Body of pancreas (tissue), 4 donors: ENCODE measurements at regions of chr9 and their contacts with region 1.

Region 1: DNA sequence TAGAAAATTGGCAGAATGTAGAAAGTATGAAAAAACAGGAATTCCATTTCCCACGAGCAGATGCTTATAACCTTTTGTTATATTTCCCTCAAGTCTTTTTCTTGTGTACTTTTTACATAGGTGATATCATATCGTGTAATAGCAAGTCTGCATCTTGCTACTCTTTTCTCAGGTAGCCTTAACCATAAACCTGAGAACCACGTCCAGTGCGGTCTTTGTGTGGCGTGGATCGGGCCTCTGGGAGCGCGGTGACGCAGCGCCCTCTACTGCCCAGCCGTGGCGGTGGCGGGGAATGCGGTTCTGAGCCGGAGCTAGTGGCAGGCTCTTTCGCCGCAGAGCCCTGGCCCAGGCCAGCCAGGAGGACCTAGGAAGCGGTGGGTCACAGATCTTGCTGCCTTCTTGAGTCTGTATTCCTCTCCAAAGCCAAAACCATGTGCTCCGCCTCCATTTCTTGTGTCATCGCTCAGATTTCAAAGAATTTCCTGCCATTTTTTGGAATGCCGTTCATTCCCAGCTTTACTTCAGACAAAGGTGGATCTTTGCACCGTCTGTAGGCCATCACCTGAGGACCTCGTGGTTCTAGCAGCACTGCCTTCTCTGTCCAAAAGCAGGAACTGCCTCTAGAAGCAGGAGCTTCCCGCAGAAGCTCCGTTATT is 71.9 kb downstream of the MVB12B start:
- DNase-seq: peak; percentile 72 to 81 (median 77)
- ATAC-seq: peak; percentile 88
- H3K4me3 ChIP-seq: no peak overlapping the region
- H3K27ac ChIP-seq: no peak overlapping the region
- H3K4me1 ChIP-seq: no peaks in the 10 kb centered on the region
- H3K27me3 ChIP-seq: no peaks in the 10 kb centered on the region
- CTCF ChIP-seq: peak; percentile 88 to 97 (median 93)
- POLR2A ChIP-seq: no peak

Region 2: DNA sequence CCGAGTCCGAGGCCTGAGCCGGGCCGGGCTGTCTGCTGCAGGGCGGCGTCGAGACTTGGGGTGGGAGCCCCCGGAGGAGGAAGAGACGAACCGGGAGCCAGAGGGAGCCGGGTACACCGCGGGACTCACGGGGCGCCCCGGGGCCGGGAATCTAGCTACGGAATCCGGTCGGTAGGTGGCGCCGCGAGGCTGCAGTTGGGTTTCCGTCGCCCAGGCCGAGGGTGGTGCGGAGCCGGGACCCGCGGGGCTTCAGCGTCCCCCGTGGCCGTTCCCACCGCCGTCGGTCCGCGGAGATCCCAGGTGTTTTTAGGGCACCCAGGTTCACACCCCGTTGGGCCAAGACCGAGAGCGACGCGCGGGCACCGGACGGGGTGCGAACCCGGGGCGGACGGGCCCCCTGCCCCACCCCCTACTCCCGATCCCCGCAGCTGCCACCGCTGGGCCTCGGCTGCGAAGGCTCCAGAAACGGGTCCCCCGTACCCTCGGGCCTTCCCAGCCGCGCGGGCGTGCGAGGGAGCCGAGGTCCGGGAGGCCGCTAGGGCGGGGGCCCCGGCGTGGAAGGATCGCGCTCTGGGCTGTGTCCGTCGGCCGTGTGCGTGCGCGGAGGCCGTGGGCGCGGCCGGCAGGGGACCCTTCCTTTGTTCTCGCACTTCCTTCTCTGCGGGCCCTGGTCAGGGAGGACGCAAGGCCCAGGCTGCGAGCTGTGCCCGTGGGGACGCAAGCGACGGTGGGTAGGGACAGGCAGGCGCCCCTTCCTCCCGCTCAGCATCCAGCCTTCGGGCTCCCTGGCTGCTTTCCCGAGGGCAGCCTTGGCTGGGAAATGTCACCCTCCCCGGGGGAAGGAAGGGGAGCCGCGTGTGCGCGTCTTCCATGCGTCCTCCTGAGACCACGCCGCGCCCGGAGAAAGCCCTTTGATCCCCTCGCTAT is 990.3 kb before region 1 on chr9:
- intact Hi-C with region 1: loop called (anchors 10 kb)
- DNase-seq: peak; percentile 66 to 75 (median 70)
- ATAC-seq: peak; percentile 81
- H3K4me3 ChIP-seq: peak overlapping the region in 1 of 2 donors; percentile 21
- H3K27ac ChIP-seq: no peak overlapping the region
- H3K4me1 ChIP-seq: peaks cover 11% of the 10 kb centered on the region
- H3K27me3 ChIP-seq: peaks cover 0 to 8% of the 10 kb centered on the region in 2 donors
- CTCF ChIP-seq: peak; percentile 54 to 87 (median 78)
- POLR2A ChIP-seq: no peak

Region 3: GRCh38 chr9:126456441-126457174 is 58.1 kb after region 1 on chr9:
- intact Hi-C with region 1: loop called (anchors 10 kb)
- DNase-seq: peak in 1 of 4 donors; percentile 2
- ATAC-seq: no peak
- H3K4me3 ChIP-seq: no peak overlapping the region
- H3K27ac ChIP-seq: no peak overlapping the region
- H3K4me1 ChIP-seq: no peaks in the 10 kb centered on the region
- H3K27me3 ChIP-seq: no peaks in the 10 kb centered on the region
- CTCF ChIP-seq: no peak
- POLR2A ChIP-seq: no peak